CD4-positive, alpha-beta T cell (primary cell): ENCODE measurements at regions of chr5 and their contacts with region 1.

Region 1: GRCh38 chr5:138464008-138464387 is 1.3 kb upstream of the EGR1 start:
- DNase-seq: peak; percentile 85 to 98 (median 93)
- ATAC-seq: peak; percentile 51
- H3K4me3 ChIP-seq: peak overlapping the region; percentile 60
- H3K4me3 Mint-ChIP-seq: peak overlapping the region; percentile 96
- H3K27ac ChIP-seq: peak overlapping the region; percentile 89 to 94
- H3K27ac Mint-ChIP-seq: peak overlapping the region; percentile 93
- H3K4me1 ChIP-seq: peaks cover 60% of the 10 kb centered on the region
- H3K4me1 Mint-ChIP-seq: peaks cover 50% of the 10 kb centered on the region
- H3K27me3 ChIP-seq: no peaks in the 10 kb centered on the region
- H3K27me3 Mint-ChIP-seq: no peaks in the 10 kb centered on the region
- CTCF ChIP-seq: peak; percentile 85

Region 2: GRCh38 chr5:138386290-138386689 is 77.7 kb before region 1 on chr5:
- CTCF ChIA-PET with region 1: no interaction called
- POLR2A ChIA-PET with region 1: no interaction called
- intact Hi-C with region 1: no loop called
- DNase-seq: no peak
- ATAC-seq: no peak
- H3K4me3 ChIP-seq: no peak overlapping the region
- H3K4me3 Mint-ChIP-seq: no peak overlapping the region
- H3K27ac ChIP-seq: no peak overlapping the region
- H3K27ac Mint-ChIP-seq: no peak overlapping the region
- H3K4me1 ChIP-seq: no peaks in the 10 kb centered on the region
- H3K4me1 Mint-ChIP-seq: no peaks in the 10 kb centered on the region
- H3K27me3 ChIP-seq: no peaks in the 10 kb centered on the region
- H3K27me3 Mint-ChIP-seq: no peaks in the 10 kb centered on the region
- CTCF ChIP-seq: no peak

Region 3: DNA sequence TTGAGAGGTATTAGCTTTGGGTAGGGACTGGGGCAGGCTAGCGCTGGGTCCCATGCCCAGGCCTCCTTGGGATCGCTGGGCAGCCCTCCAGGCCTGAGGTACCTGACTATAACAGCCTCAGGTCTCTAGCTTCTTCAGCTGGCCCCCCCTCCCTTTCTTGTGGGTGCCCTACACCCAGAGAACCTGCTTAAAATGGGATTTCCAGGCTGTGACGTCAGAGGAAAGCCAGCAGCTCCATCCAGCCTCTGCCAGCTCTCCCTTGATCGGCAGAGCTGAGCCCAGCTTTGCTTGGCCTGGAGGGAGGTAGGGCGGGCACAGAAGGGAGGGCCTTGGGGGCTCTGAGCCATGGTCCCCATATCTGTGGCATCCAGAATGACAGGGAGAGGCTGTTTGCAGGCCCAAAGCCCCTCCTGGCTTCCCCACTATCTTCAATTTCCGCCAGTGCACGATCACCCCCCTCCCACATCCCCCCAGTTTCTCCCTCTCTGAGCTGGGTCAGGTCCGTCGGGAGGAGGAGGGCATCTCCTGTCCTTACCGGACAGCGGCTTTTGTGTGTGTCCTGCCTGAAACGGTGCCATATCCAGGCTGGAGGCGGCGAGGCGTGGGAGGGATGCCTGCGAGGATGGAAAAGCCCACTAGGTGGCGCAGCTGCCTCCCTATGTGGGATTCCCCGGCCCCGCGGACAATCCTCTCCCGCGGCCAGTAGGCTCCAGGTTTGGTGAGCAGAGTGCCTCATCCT is 14.3 kb before region 1 on chr5:
- CTCF ChIA-PET with region 1: interaction called, 32 read pairs
- POLR2A ChIA-PET with region 1: interaction called, 3 read pairs
- intact Hi-C with region 1: no loop called
- DNase-seq: peak; percentile 56 to 87 (median 67)
- ATAC-seq: peak; percentile 87
- H3K4me3 ChIP-seq: no peak overlapping the region
- H3K4me3 Mint-ChIP-seq: no peak overlapping the region
- H3K27ac ChIP-seq: no peak overlapping the region
- H3K27ac Mint-ChIP-seq: peak overlapping the region; percentile 54
- H3K4me1 ChIP-seq: peaks cover 10% of the 10 kb centered on the region
- H3K4me1 Mint-ChIP-seq: peaks cover 6% of the 10 kb centered on the region
- H3K27me3 ChIP-seq: no peaks in the 10 kb centered on the region
- H3K27me3 Mint-ChIP-seq: no peaks in the 10 kb centered on the region
- CTCF ChIP-seq: peak; percentile 94

Region 4: DNA sequence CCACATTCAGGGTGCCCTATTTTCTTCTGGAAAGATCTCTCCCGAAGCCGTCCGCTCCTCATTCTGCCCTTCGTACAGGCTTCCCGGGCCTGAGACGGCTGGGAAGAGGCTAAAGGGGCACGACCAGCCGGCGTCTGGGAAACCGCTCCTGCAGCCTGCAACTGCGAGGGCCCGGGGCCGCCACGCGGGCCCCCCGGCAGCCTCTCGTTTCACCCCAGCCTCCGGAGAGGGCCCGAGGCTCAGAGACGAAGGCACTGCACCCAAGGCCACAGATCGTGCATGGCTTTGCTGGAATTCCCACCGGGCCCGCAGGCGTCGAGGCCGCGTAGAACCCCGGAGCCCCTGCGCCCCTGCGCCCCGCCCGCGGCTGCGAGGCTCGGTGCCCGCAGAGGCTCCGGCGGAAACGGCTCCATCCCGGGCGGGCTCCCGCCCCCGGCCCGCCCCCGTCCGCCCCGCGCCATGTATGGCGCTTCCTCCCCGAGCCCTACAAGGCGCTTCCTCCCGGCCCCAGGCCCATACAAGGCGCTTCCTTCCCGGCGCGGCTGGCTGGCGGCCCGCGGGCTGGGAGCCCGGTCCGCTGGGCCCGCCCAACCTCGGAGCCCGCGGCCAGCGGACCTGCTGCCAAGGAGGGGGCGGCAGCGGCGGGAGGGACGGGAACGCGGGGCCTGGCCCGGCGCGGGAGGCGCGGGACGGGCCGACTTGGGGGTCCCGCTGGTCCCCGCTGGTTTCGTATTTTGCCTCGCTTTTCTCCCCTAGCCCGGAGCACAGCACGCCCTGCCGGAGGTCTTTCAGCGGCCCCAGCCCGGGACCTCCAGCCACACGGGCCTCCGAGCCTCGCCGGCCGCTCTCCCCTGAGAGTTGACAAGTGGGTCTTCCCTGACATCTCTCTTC is 27.9 kb after region 1 on chr5:
- CTCF ChIA-PET with region 1: interaction called, 16 read pairs
- POLR2A ChIA-PET with region 1: interaction called, 20 read pairs
- intact Hi-C with region 1: loop called (anchors 1 kb)
- DNase-seq: peak; percentile 73 to 94 (median 82)
- ATAC-seq: peak; percentile 99
- H3K4me3 ChIP-seq: peak overlapping the region; percentile 60
- H3K4me3 Mint-ChIP-seq: peak overlapping the region; percentile 90
- H3K27ac ChIP-seq: no peak overlapping the region
- H3K27ac Mint-ChIP-seq: peak overlapping the region; percentile 3
- H3K4me1 ChIP-seq: peaks cover 24% of the 10 kb centered on the region
- H3K4me1 Mint-ChIP-seq: peaks cover 15% of the 10 kb centered on the region
- H3K27me3 ChIP-seq: peaks cover 0 to 17% of the 10 kb centered on the region in 2 experiments
- H3K27me3 Mint-ChIP-seq: peaks cover 18% of the 10 kb centered on the region
- CTCF ChIP-seq: no peak